OCI-LY7 (cell line): ENCODE measurements at regions of chr6 and their contacts with region 1.

Region 1: DNA sequence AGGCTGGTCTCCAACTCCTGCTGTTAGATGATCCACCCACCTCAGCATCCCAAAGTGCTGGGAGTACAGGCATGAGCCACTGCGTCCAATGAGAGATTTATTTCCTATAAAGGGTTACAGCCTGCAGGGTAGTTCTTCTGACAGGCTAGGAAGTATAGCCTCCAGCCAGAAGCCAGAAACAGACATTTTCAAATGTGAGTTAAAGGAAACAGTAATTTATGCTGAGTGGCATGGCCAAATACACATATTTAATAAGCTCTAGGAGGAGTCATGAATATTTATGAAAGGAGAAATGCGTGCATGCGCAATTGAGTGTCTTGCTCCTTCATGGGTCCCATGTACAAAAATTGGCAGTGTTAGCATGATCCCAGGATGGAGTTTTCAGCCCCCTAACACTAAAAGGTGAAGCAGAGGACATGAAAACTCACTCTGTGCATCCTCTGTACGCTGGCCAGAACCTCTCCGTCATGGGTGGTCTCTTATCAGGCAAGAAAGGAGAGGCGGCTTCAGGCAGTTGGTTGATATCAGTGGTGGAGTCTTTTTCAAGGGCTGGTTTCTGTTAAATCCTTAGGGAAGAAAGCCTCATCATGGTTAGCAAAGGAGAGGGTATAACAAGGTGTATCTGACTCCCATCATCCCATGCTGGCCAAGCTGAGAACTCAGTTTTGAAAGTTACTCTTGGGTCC is 21.3 kb upstream of the PDCD2 start:
- DNase-seq: no peak
- H3K4me3 ChIP-seq: no peak overlapping the region
- H3K27ac ChIP-seq: no peak overlapping the region
- H3K4me1 ChIP-seq: no peaks in the 10 kb centered on the region
- CTCF ChIP-seq: no peak

Region 2: DNA sequence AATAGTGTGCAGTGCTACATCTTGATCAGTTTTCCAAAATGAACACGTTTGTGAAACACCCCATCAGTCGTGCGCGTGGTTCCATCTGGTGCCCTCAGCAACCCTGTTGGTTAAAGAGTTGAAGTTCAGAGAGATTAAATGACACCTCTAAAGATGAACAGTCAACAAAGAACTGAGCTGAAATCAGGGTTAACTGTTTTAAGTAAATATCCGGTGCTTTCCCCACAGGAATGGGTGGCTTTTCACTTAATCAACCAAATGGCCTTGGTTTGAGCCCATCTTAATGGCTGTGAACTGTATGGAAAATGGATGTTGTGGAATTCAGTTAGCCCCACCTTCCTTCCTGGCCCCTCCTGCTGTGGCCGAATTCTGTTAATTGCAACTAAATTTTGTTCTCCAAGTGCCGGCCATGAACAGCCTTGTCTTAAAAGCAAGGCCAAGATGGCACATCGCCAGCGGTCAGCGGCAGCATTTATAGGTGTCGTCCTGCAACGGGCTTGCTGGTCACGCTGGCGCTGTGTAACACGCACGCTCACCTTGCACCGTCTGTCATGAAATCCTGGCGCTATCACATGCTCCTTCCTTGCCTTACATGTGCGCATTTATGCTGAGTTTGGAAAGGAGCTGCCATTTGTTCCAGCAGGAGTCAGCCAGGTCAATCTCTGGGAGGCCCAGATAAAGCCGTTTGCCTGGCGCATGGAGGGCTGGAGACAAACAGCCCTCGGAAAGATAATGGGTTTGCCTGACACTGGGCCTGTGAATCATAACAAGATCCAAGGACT is 689.8 kb before region 1 on chr6:
- CTCF ChIA-PET with region 1: interaction called, 10 read pairs
- POLR2A ChIA-PET with region 1: no interaction called
- intact Hi-C with region 1: no loop called
- DNase-seq: no peak
- H3K4me3 ChIP-seq: no peak overlapping the region
- H3K27ac ChIP-seq: no peak overlapping the region
- H3K4me1 ChIP-seq: no peaks in the 10 kb centered on the region
- CTCF ChIP-seq: no peak